Activated CD4-positive, alpha-beta T cell treated with anti-CD3 and anti-CD28 coated beads for 36 hours (primary cell): ENCODE measurements at regions of chr3 and their contacts with region 1.

Region 1: DNA sequence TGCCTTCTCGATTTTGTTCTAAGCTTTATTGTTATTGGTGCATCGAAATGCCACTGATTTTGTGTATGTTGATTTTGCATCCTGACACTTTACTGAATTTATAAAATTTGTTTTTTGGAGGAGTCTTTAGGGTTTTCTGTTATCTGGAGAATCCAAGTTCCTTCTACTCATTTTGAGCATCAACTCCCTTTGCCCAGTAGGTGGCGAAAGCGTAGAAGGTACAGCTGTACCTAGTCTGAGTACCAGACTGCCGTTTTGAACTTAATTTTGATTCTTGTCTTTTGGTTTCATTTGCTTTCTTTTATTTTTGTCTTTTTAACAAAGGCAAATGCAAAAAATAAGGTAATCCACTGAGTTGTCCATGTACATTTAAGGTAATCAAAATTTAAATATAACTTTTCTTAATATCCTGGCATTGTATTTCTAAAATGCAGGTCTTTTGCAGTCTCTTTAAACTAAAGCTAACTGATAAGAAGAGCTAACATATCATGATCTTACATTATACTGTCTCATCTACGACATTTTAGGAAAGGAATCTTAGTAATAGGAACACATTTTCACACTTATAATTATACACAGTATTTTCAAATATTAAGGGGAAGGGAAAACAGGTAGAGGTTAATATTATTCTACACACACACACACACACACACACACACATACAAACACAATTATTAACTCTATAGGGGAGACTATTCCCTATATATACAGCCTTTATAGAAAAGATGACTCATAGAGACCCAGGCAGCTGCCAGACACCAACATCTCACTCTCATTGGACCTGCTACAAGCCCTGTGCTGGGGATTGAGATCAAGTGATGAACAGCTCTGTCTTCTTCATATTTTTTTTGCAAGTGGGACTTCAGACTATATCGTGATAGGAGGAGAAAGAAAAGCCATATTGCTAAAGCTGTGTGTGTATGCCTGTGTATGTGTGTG is 71.7 kb downstream of the SYNPR start:
- DNase-seq: peak; percentile 66
- ATAC-seq: peak; percentile 70
- H3K4me3 Mint-ChIP-seq: no peak overlapping the region
- H3K27ac Mint-ChIP-seq: no peak overlapping the region
- H3K4me1 Mint-ChIP-seq: no peaks in the 10 kb centered on the region
- H3K27me3 Mint-ChIP-seq: peaks cover 26% of the 10 kb centered on the region

Region 2: DNA sequence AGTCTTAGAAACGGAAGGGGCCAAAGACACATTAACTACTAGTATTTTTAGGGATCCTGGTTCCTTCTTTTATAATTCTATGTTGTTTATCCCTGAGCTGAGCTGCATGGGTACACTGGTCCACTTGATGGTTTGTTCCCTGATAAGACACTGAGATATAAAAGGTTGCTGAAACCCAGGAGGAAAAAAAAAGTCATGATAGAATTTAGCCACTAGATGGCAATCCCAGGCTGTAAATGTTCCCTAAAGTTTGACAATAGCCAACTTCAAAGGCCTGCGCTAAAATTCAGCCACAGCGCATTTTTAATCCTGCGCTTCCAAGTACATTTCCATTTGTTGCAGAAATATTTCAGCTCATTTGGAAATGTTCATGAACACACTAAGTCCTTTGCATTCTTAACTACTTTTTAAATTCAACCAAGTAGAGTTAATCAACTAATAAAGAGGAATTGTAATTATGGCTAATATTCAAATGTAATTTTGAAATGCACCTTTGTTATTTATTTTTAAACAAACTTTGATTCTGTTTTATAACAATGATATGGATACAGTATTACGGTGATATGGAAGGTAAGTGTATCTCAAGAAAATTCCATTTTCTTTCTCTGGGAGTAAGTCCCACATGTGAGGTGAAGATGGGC is 727.2 kb before region 1 on chr3:
- CTCF ChIA-PET with region 1: no interaction called
- POLR2A ChIA-PET with region 1: no interaction called
- intact Hi-C with region 1: loop called in 1 of 2 experiments (anchors 5 kb)
- DNase-seq: peak; percentile 6
- ATAC-seq: no peak
- H3K4me3 Mint-ChIP-seq: no peak overlapping the region
- H3K27ac Mint-ChIP-seq: no peak overlapping the region
- H3K4me1 Mint-ChIP-seq: no peaks in the 10 kb centered on the region
- H3K27me3 Mint-ChIP-seq: peaks cover 17% of the 10 kb centered on the region